Astrocyte of the cerebellum (primary cell): ENCODE measurements at regions of chr10 and their contacts with region 1.

Region 1: GRCh38 chr10:100998991-100999741 is 442 bp upstream of the LZTS2 start:
- DNase-seq: no peak
- H3K4me3 ChIP-seq: peak overlapping the region; percentile 91
- CTCF ChIP-seq: peak; percentile 74

Region 2: DNA sequence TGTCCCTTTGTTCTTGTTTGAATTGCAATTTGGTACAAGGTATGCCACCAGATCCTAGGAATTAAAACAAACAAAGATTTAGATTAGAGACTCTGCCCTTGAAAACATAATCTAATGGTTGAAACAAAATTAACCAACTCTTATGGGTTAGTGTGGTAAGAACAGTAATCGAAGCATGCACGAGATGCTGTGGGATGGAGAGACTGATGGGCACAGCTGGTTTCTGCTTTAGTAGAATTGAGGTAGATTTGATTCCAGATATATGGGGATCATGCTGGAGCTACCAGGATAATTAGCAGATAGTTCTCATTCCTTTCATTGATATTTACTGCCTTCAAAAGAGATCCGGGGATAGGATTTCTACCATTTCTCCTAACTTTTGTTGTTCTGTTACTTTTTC is 50.2 kb before region 1 on chr10:
- in situ Hi-C with region 1: no loop called
- DNase-seq: no peak
- H3K4me3 ChIP-seq: no peak overlapping the region
- CTCF ChIP-seq: no peak

Region 3: GRCh38 chr10:101031128-101031795 is 32.1 kb after region 1 on chr10 and contains the starts of genes PDZD7 and SFXN3:
- in situ Hi-C with region 1: loop called (anchors 5 kb)
- DNase-seq: peak; percentile 76
- H3K4me3 ChIP-seq: peak within 1 kb of the TSS; percentile 88
- CTCF ChIP-seq: no peak

Region 4: DNA sequence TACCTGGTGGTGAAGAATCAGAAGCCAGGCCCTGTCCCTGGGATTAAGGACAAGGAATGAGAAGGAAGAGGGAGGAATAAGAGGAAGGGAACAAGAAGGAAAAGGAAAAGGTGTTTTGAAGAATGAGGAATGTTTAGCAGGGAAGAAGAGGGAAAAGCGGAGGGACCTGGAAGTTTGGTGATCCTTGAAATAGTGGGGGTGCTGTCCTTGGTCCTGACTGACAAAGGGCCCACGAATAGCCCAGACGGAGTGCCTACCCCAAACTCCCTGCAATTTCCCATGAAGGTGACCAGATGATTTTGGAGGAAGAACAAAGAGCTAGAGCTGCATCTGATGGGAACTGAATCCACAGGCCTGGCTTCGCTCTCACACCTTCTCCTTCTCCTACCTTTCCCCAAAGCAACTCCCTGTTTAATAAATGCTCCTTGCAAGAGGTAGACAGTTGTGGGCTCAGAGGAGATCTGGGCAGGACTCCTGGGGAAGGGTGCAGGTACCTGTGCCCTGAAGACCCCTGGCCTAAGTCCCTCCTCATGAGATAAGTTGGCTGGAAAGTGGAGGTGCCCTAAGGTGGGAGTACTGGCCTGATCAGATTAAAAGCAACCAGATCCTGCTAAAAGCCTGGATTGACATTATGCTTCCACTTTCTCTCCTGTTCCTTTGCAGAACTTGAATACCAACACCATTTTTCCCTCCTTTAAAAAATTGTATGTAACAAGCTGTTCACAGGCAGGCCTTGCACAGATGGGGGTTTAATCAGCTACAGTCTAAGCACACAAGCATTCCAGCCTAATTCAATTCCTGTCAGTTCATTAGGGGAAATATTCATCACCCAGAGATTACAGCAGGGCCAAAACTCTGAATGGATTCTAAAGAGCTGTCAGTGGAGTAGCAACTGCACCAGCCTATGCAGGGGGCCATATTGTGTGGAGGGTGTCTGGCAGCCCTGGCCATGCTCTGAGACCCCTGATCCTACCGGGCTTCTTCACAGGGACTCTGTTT is 82.1 kb after region 1 on chr10:
- in situ Hi-C with region 1: no loop called
- DNase-seq: no peak
- H3K4me3 ChIP-seq: no peak overlapping the region
- CTCF ChIP-seq: no peak